CD4-positive, alpha-beta memory T cell (primary cell): ENCODE measurements at regions of chrX and their contacts with region 1.

Region 1: DNA sequence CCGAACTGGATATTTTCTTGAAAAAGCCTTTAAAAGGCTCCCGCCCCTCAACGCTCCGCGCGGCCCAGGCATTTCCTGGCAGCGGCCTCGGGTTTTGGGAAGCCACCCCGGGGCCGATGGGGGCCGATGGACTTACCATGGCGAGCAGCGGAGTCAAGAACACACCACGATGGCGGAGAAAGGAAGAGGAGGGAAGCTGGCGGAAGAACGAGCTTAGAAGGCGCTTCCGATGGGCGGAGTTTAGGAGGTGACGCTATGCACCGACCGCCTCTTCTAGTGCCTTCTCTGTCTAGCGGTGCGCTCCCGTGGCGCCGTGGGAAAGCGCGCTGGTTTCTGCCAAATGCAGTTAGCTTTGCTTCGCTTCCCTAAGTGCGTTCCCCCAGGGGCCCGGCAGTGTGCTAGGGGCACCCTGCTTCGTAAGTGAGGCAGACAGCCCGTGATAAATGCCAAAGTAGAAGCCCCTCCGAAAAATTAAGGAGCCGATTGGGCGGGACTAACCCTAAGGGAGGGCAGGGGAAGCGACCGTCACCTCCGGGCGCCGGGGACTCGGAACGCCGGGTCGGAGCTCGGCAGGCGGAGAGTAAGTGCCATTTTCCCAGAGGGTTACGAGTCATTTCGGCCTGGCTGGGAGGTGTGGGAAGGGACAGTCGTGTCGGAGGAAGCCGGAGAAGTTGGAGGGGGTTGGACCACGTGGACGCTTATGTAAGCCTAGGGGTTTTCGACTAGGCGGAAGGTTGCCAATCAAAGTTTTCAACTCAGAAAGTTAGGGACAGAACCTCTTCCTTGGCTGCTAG is at the start of gene RPL39:
- DNase-seq: peak; percentile 78 to 89 (median 85)
- H3K4me3 ChIP-seq: peak within 1 kb of the TSS; percentile 70 to 83
- H3K4me3 Mint-ChIP-seq: peak within 1 kb of the TSS; percentile 91 to 96 (median 95)
- H3K27ac ChIP-seq: peak within 1 kb of the TSS; percentile 90
- H3K27ac Mint-ChIP-seq: peak within 1 kb of the TSS; percentile 96 to 99 (median 98)
- H3K4me1 ChIP-seq: peaks cover 40% of the 10 kb centered on the region
- H3K4me1 Mint-ChIP-seq: peaks cover 10 to 52% (median 22%) of the 10 kb centered on the region in 4 donors
- H3K27me3 ChIP-seq: no peaks in the 10 kb centered on the region
- H3K27me3 Mint-ChIP-seq: no peaks in the 10 kb centered on the region
- total RNA-seq, gene RPL39: 3,907 to 4,108 TPM

Region 2: GRCh38 chrX:119574394-119575266 is 217.0 kb before region 1 on chrX and contains the start of gene UBE2A:
- CTCF ChIA-PET with region 1: no interaction called
- POLR2A ChIA-PET with region 1: interaction called, 18 read pairs
- intact Hi-C with region 1: no loop called
- DNase-seq: peak; percentile 86 to 89 (median 89)
- H3K4me3 ChIP-seq: peak within 1 kb of the TSS in 1 of 2 donors; percentile 63
- H3K4me3 Mint-ChIP-seq: peak within 1 kb of the TSS; percentile 85 to 94 (median 92)
- H3K27ac ChIP-seq: peak within 1 kb of the TSS; percentile 78
- H3K27ac Mint-ChIP-seq: peak within 1 kb of the TSS; percentile 88 to 98 (median 96)
- H3K4me1 ChIP-seq: peaks cover 22% of the 10 kb centered on the region
- H3K4me1 Mint-ChIP-seq: peaks cover 2 to 33% (median 16%) of the 10 kb centered on the region in 4 donors
- H3K27me3 ChIP-seq: no peaks in the 10 kb centered on the region
- H3K27me3 Mint-ChIP-seq: no peaks in the 10 kb centered on the region
- total RNA-seq, gene UBE2A: 46.7 to 52.5 TPM

Region 3: GRCh38 chrX:119693040-119693995 is 98.3 kb before region 1 on chrX and contains the start of gene SEPTIN6:
- CTCF ChIA-PET with region 1: no interaction called
- POLR2A ChIA-PET with region 1: interaction called, 17 read pairs
- intact Hi-C with region 1: loop called (anchors 5 kb)
- DNase-seq: peak; percentile 85 to 93 (median 93)
- H3K4me3 ChIP-seq: peak within 1 kb of the TSS; percentile 55 to 75
- H3K4me3 Mint-ChIP-seq: peak within 1 kb of the TSS; percentile 93 to 100 (median 98)
- H3K27ac ChIP-seq: peak within 1 kb of the TSS; percentile 89
- H3K27ac Mint-ChIP-seq: peak within 1 kb of the TSS; percentile 93 to 99 (median 98)
- H3K4me1 ChIP-seq: peaks cover 27% of the 10 kb centered on the region
- H3K4me1 Mint-ChIP-seq: peaks cover 9 to 38% (median 27%) of the 10 kb centered on the region in 4 donors
- H3K27me3 ChIP-seq: no peaks in the 10 kb centered on the region
- H3K27me3 Mint-ChIP-seq: no peaks in the 10 kb centered on the region
- total RNA-seq, gene SEPTIN6: 174 to 178 TPM

Region 4: DNA sequence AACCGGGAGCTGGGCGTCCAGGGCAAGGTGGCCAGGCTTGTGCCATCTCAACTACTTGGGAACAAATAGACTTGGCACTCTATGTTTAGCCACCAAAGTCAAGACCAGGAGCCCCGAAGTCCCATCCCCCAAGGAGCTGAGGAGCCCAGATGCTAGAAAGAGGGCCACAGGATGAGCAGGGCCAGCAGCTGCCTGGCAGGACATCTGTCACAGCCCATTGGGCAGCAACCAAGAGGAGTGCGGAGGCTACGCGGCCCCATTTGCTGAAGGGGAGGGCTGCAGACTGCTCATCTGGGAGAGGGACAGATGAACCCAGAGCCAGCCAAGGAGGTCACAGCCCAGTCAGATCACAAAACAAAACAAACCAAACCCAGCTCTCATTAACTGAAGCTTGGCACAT is 56.2 kb before region 1 on chrX:
- CTCF ChIA-PET with region 1: no interaction called
- POLR2A ChIA-PET with region 1: no interaction called
- intact Hi-C with region 1: no loop called
- DNase-seq: no peak
- H3K4me3 ChIP-seq: no peak overlapping the region
- H3K4me3 Mint-ChIP-seq: no peak overlapping the region
- H3K27ac ChIP-seq: no peak overlapping the region
- H3K27ac Mint-ChIP-seq: no peak overlapping the region
- H3K4me1 ChIP-seq: no peaks in the 10 kb centered on the region
- H3K4me1 Mint-ChIP-seq: no peaks in the 10 kb centered on the region
- H3K27me3 ChIP-seq: no peaks in the 10 kb centered on the region
- H3K27me3 Mint-ChIP-seq: no peaks in the 10 kb centered on the region

Region 5: DNA sequence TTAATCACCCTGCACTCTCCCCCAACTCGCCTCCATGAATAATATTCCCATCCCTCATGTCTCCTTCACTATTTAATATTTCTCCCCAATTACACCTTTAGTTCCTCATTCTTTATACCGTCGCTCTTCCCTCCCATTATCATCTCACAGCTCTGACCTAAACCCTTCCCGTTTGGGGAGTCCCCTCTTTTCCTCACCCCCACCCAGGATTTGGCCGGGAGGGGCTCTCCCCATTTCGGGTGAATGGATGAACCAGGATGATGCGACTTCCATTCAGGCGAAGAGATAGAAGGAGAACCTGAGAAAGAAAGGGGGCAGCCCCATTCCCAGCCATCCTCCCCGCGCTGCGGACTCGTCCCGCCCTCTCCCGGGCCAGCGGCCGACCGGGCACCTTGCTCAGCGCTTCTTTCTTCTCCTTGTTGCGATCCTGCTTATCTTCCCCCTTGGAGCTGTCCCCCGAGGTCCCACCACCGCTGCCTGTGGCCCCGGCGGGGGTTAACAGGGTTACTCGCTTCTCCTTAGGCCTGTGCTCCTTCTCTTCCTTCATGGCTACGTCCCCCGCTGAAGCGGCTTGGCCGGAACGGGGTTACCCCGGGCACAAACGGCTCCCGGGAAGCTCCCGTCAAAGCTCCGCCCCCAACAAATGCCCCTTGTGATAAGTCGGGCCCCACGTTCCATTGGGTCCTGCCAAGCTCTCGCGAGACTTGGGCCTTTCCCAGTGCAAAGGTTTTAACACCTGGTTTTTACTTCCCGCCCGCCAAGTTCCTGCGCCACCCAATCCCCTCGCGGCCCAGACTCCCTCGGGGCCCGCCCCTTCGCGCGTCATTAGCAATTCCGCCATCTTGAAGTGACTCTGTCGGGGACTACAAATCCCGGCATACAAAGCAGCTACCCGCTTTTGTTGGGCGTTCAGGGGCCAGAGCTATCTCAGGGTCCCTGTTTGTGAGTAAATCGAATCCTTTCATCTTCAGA is 61.0 kb after region 1 on chrX and contains the start of gene UPF3B:
- CTCF ChIA-PET with region 1: no interaction called
- POLR2A ChIA-PET with region 1: interaction called, 37 read pairs
- intact Hi-C with region 1: loop called (anchors 1 kb)
- DNase-seq: peak; percentile 88 to 98 (median 94)
- H3K4me3 ChIP-seq: peak within 1 kb of the TSS; percentile 54 to 82
- H3K4me3 Mint-ChIP-seq: peak within 1 kb of the TSS; percentile 96 to 100 (median 99)
- H3K27ac ChIP-seq: peak within 1 kb of the TSS; percentile 95
- H3K27ac Mint-ChIP-seq: peak within 1 kb of the TSS; percentile 92 to 100 (median 99)
- H3K4me1 ChIP-seq: peaks cover 10% of the 10 kb centered on the region
- H3K4me1 Mint-ChIP-seq: peaks cover 10 to 17% (median 14%) of the 10 kb centered on the region in 4 donors
- H3K27me3 ChIP-seq: no peaks in the 10 kb centered on the region
- H3K27me3 Mint-ChIP-seq: no peaks in the 10 kb centered on the region
- total RNA-seq, gene UPF3B: 11.1 to 12.1 TPM

Region 6: DNA sequence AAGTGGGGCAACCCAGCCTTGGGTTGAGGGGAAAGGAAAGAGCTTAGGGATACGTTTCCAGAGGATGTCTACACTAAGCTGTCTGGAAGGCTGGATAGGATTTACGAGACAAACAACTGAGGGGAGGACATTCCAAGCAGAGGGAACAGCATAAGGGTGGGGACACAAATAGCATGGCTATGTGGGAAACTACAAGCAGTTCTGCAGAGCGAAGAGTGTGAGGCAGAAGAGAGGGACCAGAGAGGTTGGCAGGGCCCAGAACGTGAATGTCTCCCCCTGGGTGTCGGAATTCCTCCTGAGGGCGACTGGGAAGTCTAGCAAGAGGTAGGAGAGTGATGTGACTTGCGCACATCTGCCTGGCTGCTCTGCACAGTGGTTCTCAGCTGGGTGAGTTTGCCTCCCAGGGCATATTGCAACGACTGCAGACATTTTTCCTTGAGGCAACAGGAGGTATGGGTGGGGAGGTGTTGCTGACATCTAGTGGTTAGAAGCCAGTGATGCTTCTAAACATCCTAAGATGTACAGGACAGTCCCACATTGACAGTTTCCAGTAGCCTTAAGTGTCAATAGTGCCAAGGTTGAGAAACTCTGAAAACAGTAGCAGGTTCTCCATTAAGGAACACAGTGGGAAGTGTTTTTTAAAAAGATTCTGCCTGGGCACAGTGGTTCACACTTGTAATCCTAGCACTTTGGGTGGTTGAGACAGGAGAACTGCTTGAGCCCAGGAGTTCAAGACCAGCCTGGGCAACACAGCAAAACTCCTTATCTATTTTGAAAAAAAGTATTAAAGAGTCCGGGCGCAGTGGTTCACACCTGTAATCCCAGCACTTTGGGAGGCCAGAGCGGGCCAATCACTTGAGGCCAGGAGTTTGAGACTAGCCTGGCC is 89.2 kb after region 1 on chrX:
- CTCF ChIA-PET with region 1: interaction called, 11 read pairs
- POLR2A ChIA-PET with region 1: interaction called, 20 read pairs
- intact Hi-C with region 1: loop called (anchors 2 kb)
- DNase-seq: peak; percentile 35 to 51 (median 49)
- H3K4me3 ChIP-seq: no peak overlapping the region
- H3K4me3 Mint-ChIP-seq: no peak overlapping the region
- H3K27ac ChIP-seq: peak overlapping the region; percentile 15
- H3K27ac Mint-ChIP-seq: peak overlapping the region in 6 of 7 donors; percentile 71 to 84 (median 78)
- H3K4me1 ChIP-seq: peaks cover 10% of the 10 kb centered on the region
- H3K4me1 Mint-ChIP-seq: peaks cover 9 to 16% (median 15%) of the 10 kb centered on the region in 4 donors
- H3K27me3 ChIP-seq: no peaks in the 10 kb centered on the region
- H3K27me3 Mint-ChIP-seq: no peaks in the 10 kb centered on the region

Region 7: DNA sequence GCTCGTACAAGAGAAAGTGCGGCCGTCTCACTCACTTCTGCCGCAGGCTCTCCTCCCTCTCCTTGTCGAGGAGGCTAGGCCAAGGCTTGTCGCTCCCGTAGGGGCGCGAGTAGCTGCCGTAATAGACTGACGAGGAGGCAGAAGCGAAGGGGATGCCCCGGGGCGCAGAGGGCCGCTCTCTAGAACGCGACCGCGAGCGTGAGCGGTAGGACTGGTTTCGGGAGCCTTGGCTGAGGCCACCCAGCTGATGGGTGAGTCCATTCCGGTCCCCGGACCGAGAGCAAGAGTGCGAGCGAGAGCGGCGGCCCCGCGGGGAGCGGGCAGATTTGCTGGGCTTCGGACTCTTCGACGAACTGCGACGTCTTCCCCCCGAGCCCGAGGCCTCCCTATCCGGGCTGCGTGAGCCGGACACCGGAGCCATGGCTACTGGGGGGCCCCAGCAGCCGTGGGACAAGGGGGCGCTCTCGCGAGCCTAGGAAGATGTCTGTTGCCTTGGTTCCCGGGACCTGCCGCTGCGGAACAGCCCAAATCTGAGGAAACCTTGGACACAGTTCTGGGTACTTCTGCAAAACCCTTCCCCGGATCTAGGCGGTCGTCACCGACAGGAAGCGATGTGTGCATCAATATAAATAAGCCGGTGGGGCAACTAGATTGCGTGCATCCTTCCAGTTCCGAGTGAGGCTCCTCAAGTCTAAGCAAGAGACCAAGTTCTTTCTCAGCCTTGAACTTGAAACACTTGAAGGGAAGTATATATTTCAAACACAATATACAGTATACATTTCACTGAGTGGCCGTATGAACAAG is 151.8 kb after region 1 on chrX and contains the start of gene NKAP:
- CTCF ChIA-PET with region 1: no interaction called
- POLR2A ChIA-PET with region 1: interaction called, 10 read pairs
- intact Hi-C with region 1: loop called (anchors 1 kb)
- DNase-seq: peak; percentile 78 to 82 (median 81)
- H3K4me3 ChIP-seq: peak within 1 kb of the TSS; percentile 57 to 73
- H3K4me3 Mint-ChIP-seq: peak within 1 kb of the TSS; percentile 89 to 97 (median 92)
- H3K27ac ChIP-seq: peak within 1 kb of the TSS; percentile 93
- H3K27ac Mint-ChIP-seq: peak within 1 kb of the TSS; percentile 88 to 98 (median 91)
- H3K4me1 ChIP-seq: peaks cover 20% of the 10 kb centered on the region
- H3K4me1 Mint-ChIP-seq: peaks cover 10 to 29% (median 20%) of the 10 kb centered on the region in 4 donors
- H3K27me3 ChIP-seq: no peaks in the 10 kb centered on the region
- H3K27me3 Mint-ChIP-seq: peaks cover under 1% of the 10 kb centered on the region in 2 donors
- total RNA-seq, gene NKAP: 15.1 to 15.9 TPM